Heart right ventricle (tissue), 16 donors: ENCODE measurements at regions of chr22 and their contacts with region 1.

Region 1: GRCh38 chr22:44697423-44698141 is 4.4 kb upstream of the PRR5 start:
- DNase-seq: peak; percentile 72 to 84
- ATAC-seq: peak; percentile 37 to 70 (median 64)
- H3K4me3 ChIP-seq: no peak overlapping the region
- H3K27ac ChIP-seq: no peak overlapping the region
- H3K4me1 ChIP-seq: peaks cover 2 to 21% (median 7%) of the 10 kb centered on the region in 9 donors
- H3K27me3 ChIP-seq: peaks cover 0 to 19% (median under 1%) of the 10 kb centered on the region in 7 donors
- CTCF ChIP-seq: peak; percentile 87 to 96 (median 93)

Region 2: DNA sequence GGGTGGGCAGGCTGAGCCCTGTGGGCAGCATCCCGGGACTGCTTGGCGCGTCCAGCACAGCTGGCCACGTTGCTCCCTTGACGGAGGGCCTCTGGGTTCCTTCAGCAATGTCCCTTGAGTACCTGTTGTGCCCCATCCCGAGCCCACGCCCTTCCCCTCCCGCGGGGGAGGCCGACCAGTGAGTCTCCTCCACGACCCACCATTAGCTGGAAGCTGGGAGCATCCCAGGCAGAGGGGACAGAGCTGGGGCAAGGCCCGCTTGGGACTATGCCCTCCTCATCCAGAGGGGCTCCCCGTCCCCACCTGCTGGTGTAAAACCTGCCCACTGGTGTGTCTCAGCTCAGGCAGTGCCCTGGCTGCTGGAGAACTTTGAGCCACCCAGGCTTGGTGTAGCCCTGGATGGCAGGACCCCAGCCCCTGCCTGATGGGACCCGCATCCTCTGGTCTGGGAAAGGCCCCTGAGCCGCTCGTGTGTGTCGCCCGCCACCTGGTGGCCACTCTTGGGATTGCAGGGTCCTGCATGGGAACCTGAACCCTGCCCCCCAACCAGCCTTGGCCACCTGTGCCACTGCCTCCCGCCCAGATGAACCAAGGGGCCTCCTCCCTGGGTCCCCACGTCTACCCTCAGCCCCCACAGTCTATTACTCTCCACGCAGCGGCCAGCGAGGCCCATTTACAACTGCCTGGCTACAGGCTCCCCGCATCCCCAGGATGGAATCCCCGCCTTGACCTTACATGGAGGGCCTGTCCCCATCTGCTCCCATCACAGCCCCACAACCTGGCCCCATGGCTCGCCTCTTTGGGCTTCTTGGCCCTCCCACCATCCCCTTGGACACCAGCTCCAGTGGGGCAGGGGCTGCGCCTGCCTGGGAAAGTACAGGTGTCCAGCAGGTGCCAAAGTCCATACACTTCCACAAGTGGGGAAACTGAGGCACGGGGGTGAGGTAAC is 38.2 kb after region 1 on chr22:
- intact Hi-C with region 1: loop called (anchors 1 to 2 kb)
- DNase-seq: peak; percentile 70 to 83
- ATAC-seq: peak; percentile 19 to 74 (median 54)
- H3K4me3 ChIP-seq: no peak overlapping the region
- H3K27ac ChIP-seq: no peak overlapping the region
- H3K4me1 ChIP-seq: peaks cover 0 to 15% (median 0%) of the 10 kb centered on the region in 9 donors
- H3K27me3 ChIP-seq: peaks cover 0 to 43% (median 31%) of the 10 kb centered on the region in 7 donors
- CTCF ChIP-seq: peak; percentile 95 to 100 (median 99)